ENCODE measurements at regions of chr5 and their contacts with region 1.

Region 1: GRCh38 chr5:172607213-172607793 is 33.8 kb upstream of the NEURL1B start:
- DNase-seq: peak; percentile 98
- H3K4me3 Mint-ChIP-seq: peak overlapping the region; percentile 1
- H3K27ac Mint-ChIP-seq: peak overlapping the region; percentile 40
- H3K4me1 Mint-ChIP-seq: peaks cover 10% of the 10 kb centered on the region
- H3K27me3 Mint-ChIP-seq: no peaks in the 10 kb centered on the region
- CTCF ChIP-seq: no peak

Region 2: DNA sequence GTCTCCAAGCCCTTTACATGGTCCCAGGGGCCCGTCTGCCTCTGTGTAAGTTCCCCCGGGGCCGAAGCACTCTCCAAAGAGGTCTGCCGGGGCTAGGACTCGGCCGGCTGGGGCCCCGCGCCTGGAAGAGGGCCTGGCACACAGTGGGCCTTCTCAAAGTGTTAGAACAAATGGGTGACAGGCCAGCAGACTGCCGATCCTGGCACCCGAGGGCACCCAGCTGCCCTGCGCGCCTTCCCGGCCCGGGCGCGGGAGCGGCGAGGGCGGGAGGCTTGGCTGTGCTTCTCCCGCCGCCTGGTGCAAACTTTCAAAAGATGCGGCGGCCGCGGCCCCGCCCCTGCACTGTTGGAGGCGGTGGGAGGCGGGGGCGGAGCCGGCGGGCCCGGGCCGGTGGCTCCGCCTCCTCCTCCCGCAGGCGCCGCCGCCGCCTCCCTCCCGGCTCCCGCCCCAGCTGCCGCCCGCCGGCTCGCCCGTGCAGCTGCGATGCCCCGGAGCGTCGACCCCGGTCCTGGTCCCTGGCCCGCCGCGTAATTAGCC is 33.6 kb after region 1 on chr5 and contains the start of gene NEURL1B:
- CTCF ChIA-PET with region 1: interaction called, 3 read pairs
- POLR2A ChIA-PET with region 1: interaction called, 12 read pairs
- intact Hi-C with region 1: no loop called
- DNase-seq: peak; percentile 89
- H3K4me3 Mint-ChIP-seq: peak within 1 kb of the TSS; percentile 59
- H3K27ac Mint-ChIP-seq: no peak within 1 kb of the TSS
- H3K4me1 Mint-ChIP-seq: peaks cover 45% of the 10 kb centered on the region
- H3K27me3 Mint-ChIP-seq: no peaks in the 10 kb centered on the region
- CTCF ChIP-seq: no peak
- total RNA-seq, gene NEURL1B: 4.8 and 7.6 TPM in 2 replicates

Region 3: DNA sequence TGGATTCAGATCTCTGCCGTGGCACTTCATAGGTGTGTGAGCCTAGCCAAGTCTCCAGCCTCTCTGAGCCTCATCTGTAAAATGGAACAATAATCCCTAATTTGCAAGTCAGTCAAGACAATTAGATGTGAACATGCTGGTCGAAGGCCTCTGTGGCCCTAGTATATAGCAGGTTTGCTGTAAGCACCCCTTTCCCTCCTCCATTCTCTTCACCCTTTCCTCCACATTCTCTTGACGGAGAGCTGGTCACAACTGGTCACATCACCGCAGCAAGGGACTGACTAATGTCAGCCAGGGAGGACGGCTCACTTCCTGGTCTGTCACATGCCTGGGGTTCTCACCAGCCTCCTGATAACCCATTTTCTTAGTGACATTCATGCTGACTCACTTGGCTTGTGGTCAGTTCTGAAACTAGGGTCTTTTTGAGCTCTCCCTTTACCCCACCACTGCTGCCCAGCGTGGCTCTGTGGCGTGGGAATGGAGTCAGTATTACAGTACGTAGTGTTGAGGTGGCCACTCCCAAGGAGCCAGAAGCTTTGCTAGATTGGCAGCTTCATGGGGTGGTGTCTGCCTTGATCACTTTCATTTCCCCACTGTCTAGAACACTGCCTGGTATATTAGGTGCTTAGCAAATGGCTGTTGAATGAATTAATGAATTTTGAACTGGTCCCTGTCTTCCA is 274.5 kb after region 1 on chr5:
- CTCF ChIA-PET with region 1: no interaction called
- POLR2A ChIA-PET with region 1: no interaction called
- intact Hi-C with region 1: no loop called
- DNase-seq: no peak
- H3K4me3 Mint-ChIP-seq: no peak overlapping the region
- H3K27ac Mint-ChIP-seq: peak overlapping the region; percentile 79
- H3K4me1 Mint-ChIP-seq: peaks cover 48% of the 10 kb centered on the region
- H3K27me3 Mint-ChIP-seq: no peaks in the 10 kb centered on the region
- CTCF ChIP-seq: no peak

Region 4: GRCh38 chr5:172932313-172933017 is 325.2 kb after region 1 on chr5:
- CTCF ChIA-PET with region 1: no interaction called
- POLR2A ChIA-PET with region 1: no interaction called
- intact Hi-C with region 1: no loop called
- DNase-seq: peak; percentile 82
- H3K4me3 Mint-ChIP-seq: peak overlapping the region; percentile 28
- H3K27ac Mint-ChIP-seq: peak overlapping the region; percentile 90
- H3K4me1 Mint-ChIP-seq: peaks cover 28% of the 10 kb centered on the region
- H3K27me3 Mint-ChIP-seq: no peaks in the 10 kb centered on the region
- CTCF ChIP-seq: peak; percentile 100